ENCODE measurements at regions of chrX and their contacts with region 1.

Region 1: GRCh38 chrX:70133303-70134115 is at the start of gene IGBP1:
- DNase-seq: peak; percentile 71
- H3K4me3 Mint-ChIP-seq: peak within 1 kb of the TSS; percentile 99
- H3K27ac Mint-ChIP-seq: peak within 1 kb of the TSS; percentile 97
- H3K4me1 Mint-ChIP-seq: peaks cover 32% of the 10 kb centered on the region
- H3K27me3 Mint-ChIP-seq: no peaks in the 10 kb centered on the region
- total RNA-seq, gene IGBP1: 29.4 and 29.8 TPM in 2 replicates

Region 2: DNA sequence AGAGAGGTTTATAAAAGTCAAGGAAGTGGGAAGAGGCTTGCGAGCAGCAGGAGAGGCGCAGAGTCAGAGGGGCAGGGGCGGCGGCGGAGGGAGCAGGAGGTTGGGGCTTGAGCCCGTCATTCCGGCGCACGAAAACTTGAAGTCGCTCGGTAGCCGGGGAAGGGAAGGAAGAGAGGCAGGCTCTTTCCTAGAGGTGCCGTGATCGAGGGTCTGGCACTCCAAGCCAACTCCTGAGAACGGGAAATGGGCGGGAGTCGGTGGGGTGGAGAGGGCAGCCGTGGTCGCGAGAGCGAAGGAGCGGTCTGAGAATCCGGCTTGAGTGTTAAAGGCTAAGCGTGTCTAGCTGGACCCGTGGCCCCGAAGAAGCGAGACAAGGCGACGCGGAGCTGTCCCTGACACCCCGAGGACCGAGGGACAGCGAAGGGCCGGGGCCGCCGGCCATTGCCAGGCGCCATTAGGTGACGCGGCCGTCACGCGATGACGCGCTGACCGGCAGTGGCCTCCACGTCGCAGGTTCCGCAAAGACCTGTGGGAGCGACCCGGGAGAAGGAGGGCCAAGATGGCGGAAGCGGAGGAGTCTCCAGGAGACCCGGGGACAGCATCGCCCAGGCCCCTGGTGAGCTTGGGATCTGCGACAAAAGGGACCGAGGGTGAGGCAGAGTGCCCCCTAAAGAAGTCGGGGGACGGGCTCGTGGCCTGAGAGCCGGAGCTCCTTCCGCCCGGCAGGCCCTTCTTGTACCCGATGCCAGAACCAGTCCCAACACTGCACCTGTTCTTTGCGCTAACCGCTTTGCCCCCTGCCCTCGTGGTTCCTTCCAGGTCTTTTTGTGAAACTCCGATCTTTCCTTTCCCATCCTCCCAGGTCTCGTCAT is 1634.8 kb before region 1 on chrX and contains the start of gene YIPF6:
- intact Hi-C with region 1: loop called (anchors 5 kb)
- DNase-seq: peak; percentile 64
- H3K4me3 Mint-ChIP-seq: peak within 1 kb of the TSS; percentile 90
- H3K27ac Mint-ChIP-seq: peak within 1 kb of the TSS; percentile 96
- H3K4me1 Mint-ChIP-seq: peaks cover 8% of the 10 kb centered on the region
- H3K27me3 Mint-ChIP-seq: no peaks in the 10 kb centered on the region
- total RNA-seq, gene YIPF6: 20.5 and 23.6 TPM in 2 replicates

Region 3: GRCh38 chrX:69285881-69286564 is 847.5 kb before region 1 on chrX:
- intact Hi-C with region 1: loop called (anchors 5 kb)
- DNase-seq: peak; percentile 30
- H3K4me3 Mint-ChIP-seq: no peak overlapping the region
- H3K27ac Mint-ChIP-seq: no peak overlapping the region
- H3K4me1 Mint-ChIP-seq: no peaks in the 10 kb centered on the region
- H3K27me3 Mint-ChIP-seq: no peaks in the 10 kb centered on the region

Region 4: DNA sequence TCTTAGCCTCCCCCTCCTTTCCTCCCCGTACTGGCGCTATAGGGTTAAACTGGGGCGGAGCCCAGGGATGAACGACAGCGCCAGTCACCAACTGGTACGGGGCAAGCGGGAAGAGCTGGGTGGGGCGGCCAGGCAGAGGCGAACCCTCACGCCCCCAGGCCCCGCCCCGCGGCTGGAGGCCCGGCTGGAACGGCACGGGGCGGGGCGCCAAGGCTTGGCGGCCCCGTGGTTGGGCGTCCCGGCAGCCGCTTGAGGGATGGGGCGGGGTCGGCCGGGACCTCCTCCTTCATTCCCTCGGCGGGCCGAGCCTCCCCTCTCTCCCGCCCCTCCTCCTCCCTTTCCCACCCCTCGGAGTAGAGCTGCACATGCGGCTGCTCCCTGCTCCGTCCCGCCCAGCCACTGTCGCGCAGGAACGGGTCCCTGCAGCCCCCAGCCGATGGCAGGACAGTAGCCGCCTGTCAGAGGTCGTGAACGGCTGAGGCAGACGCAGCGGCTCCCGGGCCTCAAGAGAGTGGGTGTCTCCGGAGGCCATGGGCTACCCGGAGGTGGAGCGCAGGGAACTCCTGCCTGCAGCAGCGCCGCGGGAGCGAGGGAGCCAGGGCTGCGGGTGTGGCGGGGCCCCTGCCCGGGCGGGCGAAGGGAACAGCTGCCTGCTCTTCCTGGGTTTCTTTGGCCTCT is 517.6 kb before region 1 on chrX and contains the start of gene EDA:
- intact Hi-C with region 1: loop called (anchors 2 kb)
- DNase-seq: peak; percentile 68
- H3K4me3 Mint-ChIP-seq: peak within 1 kb of the TSS; percentile 77
- H3K27ac Mint-ChIP-seq: no peak within 1 kb of the TSS
- H3K4me1 Mint-ChIP-seq: peaks cover 17% of the 10 kb centered on the region
- H3K27me3 Mint-ChIP-seq: peaks cover 14% of the 10 kb centered on the region
- total RNA-seq, gene EDA: 1.6 and 2.4 TPM in 2 replicates

Region 5: DNA sequence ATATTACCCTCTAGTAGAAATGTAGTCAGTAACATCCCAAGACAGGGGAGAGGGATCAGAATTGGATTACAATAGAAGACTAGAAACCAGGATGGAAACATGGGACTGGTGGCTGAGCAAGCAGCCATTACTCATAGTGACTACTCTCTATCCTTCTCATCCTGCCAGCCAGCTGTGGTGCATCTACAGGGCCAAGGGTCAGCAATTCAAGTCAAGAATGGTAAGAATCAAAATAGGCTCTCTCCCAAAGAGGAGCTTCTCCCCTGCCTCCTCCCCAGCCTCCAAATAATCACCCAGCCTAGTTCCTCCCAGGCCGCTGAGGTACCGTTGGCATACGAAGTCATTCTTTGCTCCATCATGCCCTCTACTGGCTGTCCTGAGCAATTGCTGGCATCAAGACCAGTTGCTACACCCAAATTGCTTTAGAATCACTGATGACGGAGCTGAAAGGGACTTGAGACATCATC is 103.2 kb before region 1 on chrX:
- intact Hi-C with region 1: loop called (anchors 2 kb)
- DNase-seq: peak; percentile 15
- H3K4me3 Mint-ChIP-seq: no peak overlapping the region
- H3K27ac Mint-ChIP-seq: no peak overlapping the region
- H3K4me1 Mint-ChIP-seq: peaks cover 40% of the 10 kb centered on the region
- H3K27me3 Mint-ChIP-seq: peaks cover 3% of the 10 kb centered on the region

Region 6: DNA sequence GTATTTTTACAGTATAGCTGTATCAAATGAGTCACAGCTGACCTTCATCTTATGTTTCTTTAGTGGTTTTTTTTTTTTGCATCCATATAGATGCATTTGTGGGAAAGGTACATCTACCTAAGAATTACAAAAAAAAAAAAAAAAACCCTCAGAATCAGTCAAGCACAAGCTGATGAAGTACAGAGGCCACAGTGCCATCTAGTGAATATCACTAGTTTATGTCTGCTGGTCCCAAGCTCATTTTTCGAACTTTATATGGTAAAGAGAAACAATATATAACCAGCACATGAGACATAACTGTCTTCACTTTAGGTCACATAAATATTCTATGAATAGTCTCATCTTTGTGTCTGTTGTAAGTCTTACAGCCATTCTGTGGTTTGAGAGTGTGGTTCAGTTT is 531.2 kb after region 1 on chrX:
- intact Hi-C with region 1: loop called (anchors 10 kb)
- DNase-seq: no peak
- H3K4me3 Mint-ChIP-seq: no peak overlapping the region
- H3K27ac Mint-ChIP-seq: no peak overlapping the region
- H3K4me1 Mint-ChIP-seq: no peaks in the 10 kb centered on the region
- H3K27me3 Mint-ChIP-seq: peaks cover 4% of the 10 kb centered on the region

Measured in activated T-helper 1 cell treated with anti-CD3 and anti-CD28 coated beads, Interleukin-12 subunit alpha, Interleukin-12 subunit beta, Interleukin-2, Interleukin-4 antibody, amounts not matched to agents 30 ng/mL and 10 ng/mL and 1 ng/mL, durations not matched to agents 14 hours and 24 hours and 36 hours (primary cell).